Activated T-helper 2 cell treated with anti-CD3 and anti-CD28 coated beads, Interferon-gamma antibody, Interleukin-2, Interleukin-4, amounts not matched to agents 10 μg/mL and 5 μg/mL and 100 μg/mL, durations not matched to agents 14 hours and 24 hours and 36 hours (primary cell): ENCODE measurements at regions of chr2 and their contacts with region 1.

Region 1: GRCh38 chr2:73886357-73886756 is 6.5 kb upstream of the ACTG2 start:
- DNase-seq: no peak
- H3K4me3 Mint-ChIP-seq: no peak overlapping the region
- H3K27ac Mint-ChIP-seq: peak overlapping the region; percentile 77
- H3K4me1 Mint-ChIP-seq: peaks cover 22% of the 10 kb centered on the region
- H3K27me3 Mint-ChIP-seq: no peaks in the 10 kb centered on the region

Region 2: DNA sequence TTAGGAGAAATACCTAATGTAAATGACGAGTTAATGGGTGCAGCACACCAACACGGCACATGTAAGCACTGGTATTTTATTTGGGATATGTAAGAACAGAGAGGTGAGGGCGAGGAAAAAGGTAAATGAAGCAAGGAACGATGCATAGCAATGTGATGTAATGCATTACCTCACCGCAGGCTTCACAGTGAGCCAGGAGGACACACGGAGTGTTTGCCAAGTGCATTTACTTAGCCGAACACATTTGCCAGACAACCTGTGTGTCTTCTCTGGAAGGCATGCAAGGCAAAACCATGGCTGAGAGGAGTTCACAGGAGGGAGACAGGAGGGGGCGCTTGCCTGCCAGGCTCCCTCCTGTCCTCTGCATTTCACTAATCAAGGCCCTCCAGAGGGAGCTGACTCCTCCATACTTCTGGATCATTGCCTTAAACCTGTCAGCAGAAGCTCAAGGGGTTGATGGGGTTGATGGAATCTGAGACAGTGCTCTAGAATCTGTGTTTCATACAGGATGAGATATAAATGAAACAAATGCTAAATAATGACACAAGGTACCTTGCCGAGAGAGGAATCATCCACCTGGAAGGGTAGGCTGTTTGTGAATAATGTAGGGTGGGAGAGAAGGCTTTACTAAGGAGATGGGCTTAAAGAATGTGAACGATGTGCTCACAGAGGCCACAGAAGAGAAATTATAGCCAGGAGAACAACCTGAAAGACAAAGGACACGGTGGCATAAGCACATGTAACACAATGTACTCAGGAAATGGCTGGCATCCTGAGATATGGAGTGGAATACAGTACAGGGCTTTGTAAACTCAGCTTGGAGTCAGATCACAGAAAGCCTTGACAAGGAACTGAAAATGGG is 140.1 kb before region 1 on chr2:
- intact Hi-C with region 1: no loop called
- DNase-seq: no peak
- H3K4me3 Mint-ChIP-seq: no peak overlapping the region
- H3K27ac Mint-ChIP-seq: no peak overlapping the region
- H3K4me1 Mint-ChIP-seq: peaks cover 11% of the 10 kb centered on the region
- H3K27me3 Mint-ChIP-seq: no peaks in the 10 kb centered on the region

Region 3: DNA sequence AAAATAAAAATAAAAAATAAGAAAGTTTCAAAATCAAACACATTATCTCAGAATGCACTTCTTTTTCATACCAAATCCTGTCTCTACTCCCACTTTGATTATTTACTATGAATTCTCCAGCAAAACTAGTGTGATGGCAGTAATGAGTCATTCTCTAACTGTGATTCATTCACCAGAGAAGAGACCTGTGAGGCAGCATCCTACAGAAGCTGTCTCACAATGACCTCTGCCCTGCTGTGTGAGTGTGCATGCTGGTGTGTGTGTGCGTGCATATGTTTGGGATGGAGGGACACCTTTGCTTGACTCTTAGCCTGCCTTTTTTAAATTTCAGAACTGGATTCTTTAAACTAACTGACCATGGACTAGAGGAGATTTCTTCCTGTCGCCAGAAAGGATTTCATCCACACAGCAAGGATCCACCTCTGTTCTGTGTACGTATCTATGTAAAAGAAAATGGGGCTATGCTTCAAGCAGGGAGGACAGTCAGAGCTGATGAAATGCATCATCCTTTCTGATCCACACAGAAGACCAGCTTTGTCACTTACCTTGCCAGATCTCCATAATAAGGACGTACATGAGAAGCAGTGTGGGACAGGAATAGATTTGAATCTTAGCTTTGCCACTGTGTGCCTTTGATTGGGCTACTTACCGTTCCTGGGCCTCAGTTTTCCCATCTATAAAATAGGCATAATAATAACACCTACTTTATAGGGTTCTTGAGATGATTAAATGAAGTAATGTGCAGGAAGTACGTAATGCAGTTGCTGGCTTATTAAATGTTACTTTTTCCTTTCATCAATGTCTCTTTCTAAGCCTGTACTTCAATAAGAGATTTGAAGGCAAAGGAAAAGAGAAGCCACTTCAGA is 26.4 kb before region 1 on chr2:
- intact Hi-C with region 1: loop called (anchors 1 kb)
- DNase-seq: no peak
- H3K4me3 Mint-ChIP-seq: no peak overlapping the region
- H3K27ac Mint-ChIP-seq: peak overlapping the region; percentile 57
- H3K4me1 Mint-ChIP-seq: peaks cover 47% of the 10 kb centered on the region
- H3K27me3 Mint-ChIP-seq: no peaks in the 10 kb centered on the region

Region 4: DNA sequence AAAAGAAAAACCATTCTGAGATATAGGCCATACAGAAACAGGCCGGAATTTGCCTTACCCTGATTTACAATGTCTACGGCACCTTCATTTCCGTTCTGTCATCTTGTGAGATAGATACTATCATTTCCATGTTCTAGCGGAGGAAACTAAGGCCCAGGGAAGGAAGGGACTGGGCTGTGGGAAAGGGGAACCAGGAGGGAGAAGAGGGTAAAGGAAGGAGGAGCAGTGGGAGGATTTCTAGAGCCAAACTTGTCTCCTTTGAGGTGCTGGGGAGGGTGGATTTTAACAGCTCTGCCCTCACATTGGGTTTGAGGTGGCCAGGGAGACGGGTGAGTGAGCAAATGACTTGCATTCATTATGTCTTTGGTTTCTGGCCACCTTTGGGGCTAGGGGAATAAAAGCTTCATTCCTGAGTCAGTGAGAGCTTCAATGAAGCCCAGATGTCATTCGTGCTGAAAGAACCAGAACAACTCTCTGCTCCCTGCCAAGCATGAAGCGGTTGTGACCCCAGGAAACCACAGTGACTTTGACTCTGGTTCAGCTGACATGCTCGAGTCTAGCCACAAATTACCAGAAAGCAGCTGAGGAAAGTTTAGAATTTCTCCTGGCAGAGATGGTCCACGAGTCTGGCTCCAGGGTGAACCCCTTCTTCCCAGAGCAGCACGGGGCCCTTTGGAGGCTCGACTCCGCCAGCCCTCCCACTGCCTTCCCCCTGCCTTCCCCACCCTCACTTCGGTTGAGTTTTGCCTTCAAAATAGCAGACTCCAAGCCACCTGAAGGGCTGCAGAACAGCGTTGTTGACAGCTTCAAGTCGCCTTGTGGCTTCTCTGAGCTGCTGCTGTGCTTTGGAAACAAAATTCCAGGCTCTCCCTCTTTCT is 10.2 kb after region 1 on chr2:
- intact Hi-C with region 1: loop called (anchors 1 kb)
- DNase-seq: peak; percentile 24
- H3K4me3 Mint-ChIP-seq: peak overlapping the region; percentile 42
- H3K27ac Mint-ChIP-seq: peak overlapping the region; percentile 92
- H3K4me1 Mint-ChIP-seq: peaks cover 35% of the 10 kb centered on the region
- H3K27me3 Mint-ChIP-seq: no peaks in the 10 kb centered on the region

Region 5: GRCh38 chr2:73926493-73927338 is 40.4 kb after region 1 on chr2 and contains the start of gene DGUOK:
- intact Hi-C with region 1: loop called (anchors 5 kb)
- DNase-seq: peak; percentile 98
- H3K4me3 Mint-ChIP-seq: peak within 1 kb of the TSS; percentile 89
- H3K27ac Mint-ChIP-seq: peak within 1 kb of the TSS; percentile 94
- H3K4me1 Mint-ChIP-seq: peaks cover 49% of the 10 kb centered on the region
- H3K27me3 Mint-ChIP-seq: no peaks in the 10 kb centered on the region
- total RNA-seq, gene DGUOK: 86.8 and 90.9 TPM in 2 replicates